ENCODE measurements at regions of chr5 and their contacts with region 1.

Region 1: DNA sequence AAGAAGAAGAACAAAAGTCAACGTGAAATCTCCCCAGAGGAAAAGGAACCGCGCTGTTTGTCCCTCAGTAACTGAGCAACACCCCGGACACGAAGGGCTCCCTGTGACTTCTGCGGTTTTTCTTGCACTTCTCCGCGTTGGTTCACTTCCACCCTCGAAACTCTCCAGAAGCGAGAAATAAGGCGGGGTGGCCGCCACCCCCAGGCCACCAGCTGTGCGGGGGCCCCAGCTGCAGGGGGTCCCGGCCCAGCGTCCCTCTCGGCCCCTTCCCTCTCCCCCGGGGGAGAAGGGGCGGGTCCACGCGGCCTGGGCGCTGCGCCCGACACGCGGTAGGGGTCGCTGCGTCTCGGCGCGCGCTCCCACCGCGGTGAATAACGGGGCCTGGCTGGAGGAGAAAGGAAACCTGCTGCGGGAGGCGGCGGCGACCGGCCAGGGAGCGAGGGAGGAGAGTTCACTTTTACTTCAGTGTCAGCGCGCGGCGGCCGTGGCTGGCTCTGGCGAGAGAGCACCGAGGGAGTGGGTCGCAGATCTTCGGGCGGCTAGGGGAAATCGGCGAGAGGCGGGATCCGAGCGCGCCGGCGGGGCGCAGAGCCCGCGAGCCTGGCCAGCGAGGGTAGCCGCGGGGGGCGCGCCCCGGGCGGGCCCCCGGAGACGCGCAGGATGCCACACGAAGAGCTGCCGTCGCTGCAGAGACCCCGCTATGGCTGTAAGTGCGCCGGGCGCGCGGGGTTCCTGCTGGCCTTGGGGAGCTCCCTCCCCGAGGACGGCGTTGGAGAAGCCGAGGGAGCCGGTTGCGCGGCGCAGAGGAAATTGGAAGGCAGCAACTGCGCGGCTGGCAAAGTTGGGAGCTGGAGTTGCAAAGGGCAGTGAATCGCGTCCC is at the start of gene IQGAP2:
- DNase-seq: peak; percentile 79 to 95 (median 92)
- ATAC-seq: peak; percentile 57 to 65
- H3K4me3 Mint-ChIP-seq: peak within 1 kb of the TSS; percentile 91 to 98 (median 96)
- H3K27ac Mint-ChIP-seq: peak within 1 kb of the TSS; percentile 93 to 98 (median 97)
- H3K4me1 Mint-ChIP-seq: peaks cover 27 to 63% (median 55%) of the 10 kb centered on the region in 4 donors
- H3K27me3 Mint-ChIP-seq: no peaks in the 10 kb centered on the region
- polyA plus RNA-seq, gene IQGAP2: 16.2 to 22.0 (median 19.5) TPM

Region 2: DNA sequence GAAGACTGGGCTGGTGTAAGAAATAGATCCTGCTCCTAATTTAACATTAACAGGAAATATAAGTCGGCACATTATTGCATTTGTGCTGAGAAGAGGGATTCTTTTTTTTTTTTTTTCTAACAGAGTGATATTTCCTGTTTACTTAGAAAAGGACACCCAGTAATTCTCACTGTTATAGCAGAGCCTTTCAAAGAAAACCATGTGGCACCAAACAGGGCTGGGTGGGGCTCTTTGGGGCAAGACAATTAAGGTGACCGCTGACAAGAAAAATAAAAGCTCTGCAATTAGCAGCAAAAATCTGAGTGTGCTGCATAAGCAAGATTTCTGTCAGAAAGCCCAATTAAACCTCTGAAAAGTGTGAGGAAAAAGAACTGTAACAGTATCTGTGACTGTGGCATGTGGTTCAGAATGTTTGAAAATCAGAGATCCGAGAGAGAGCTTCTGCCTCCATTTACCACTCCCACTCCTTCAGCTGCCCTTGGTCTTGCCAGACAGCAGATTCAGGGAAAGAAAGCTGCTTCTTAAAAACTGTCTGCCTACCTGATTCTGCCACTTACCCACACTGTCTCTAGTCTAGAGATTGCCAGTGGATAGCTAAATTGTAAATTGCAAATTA is 77.1 kb before region 1 on chr5:
- POLR2A ChIA-PET with region 1: interaction called, 18 read pairs
- DNase-seq: peak in 4 of 10 donors; percentile 15 to 53 (median 48)
- ATAC-seq: peak; percentile 84 to 89
- H3K4me3 Mint-ChIP-seq: peak overlapping the region; percentile 56 to 83 (median 76)
- H3K27ac Mint-ChIP-seq: peak overlapping the region; percentile 87 to 96 (median 93)
- H3K4me1 Mint-ChIP-seq: peaks cover 28 to 60% (median 47%) of the 10 kb centered on the region in 4 donors
- H3K27me3 Mint-ChIP-seq: no peaks in the 10 kb centered on the region

Region 3: GRCh38 chr5:76384189-76384588 is 18.9 kb before region 1 on chr5:
- POLR2A ChIA-PET with region 1: interaction called, 58 read pairs
- DNase-seq: no peak
- ATAC-seq: peak; percentile 32 to 43
- H3K4me3 Mint-ChIP-seq: peak overlapping the region in 7 of 10 donors; percentile 12 to 63 (median 42)
- H3K27ac Mint-ChIP-seq: peak overlapping the region in 6 of 10 donors; percentile 7 to 85 (median 42)
- H3K4me1 Mint-ChIP-seq: peaks cover 19 to 51% (median 41%) of the 10 kb centered on the region in 4 donors
- H3K27me3 Mint-ChIP-seq: no peaks in the 10 kb centered on the region

Region 4: GRCh38 chr5:76451031-76451701 is 48.0 kb after region 1 on chr5:
- POLR2A ChIA-PET with region 1: no interaction called
- DNase-seq: no peak
- ATAC-seq: no peak
- H3K4me3 Mint-ChIP-seq: peak overlapping the region in 5 of 10 donors; percentile 3 to 46 (median 9)
- H3K27ac Mint-ChIP-seq: peak overlapping the region in 6 of 10 donors; percentile 2 to 65 (median 16)
- H3K4me1 Mint-ChIP-seq: peaks cover 33 to 76% (median 52%) of the 10 kb centered on the region in 4 donors
- H3K27me3 Mint-ChIP-seq: no peaks in the 10 kb centered on the region

Region 5: GRCh38 chr5:76473661-76474060 is 70.5 kb after region 1 on chr5:
- POLR2A ChIA-PET with region 1: interaction called, 22 read pairs
- DNase-seq: peak; percentile 30 to 85 (median 68)
- ATAC-seq: peak; percentile 97 to 99
- H3K4me3 Mint-ChIP-seq: peak overlapping the region; percentile 11 to 85 (median 60)
- H3K27ac Mint-ChIP-seq: peak overlapping the region; percentile 83 to 98 (median 92)
- H3K4me1 Mint-ChIP-seq: peaks cover 35 to 77% (median 72%) of the 10 kb centered on the region in 4 donors
- H3K27me3 Mint-ChIP-seq: no peaks in the 10 kb centered on the region

Region 6: DNA sequence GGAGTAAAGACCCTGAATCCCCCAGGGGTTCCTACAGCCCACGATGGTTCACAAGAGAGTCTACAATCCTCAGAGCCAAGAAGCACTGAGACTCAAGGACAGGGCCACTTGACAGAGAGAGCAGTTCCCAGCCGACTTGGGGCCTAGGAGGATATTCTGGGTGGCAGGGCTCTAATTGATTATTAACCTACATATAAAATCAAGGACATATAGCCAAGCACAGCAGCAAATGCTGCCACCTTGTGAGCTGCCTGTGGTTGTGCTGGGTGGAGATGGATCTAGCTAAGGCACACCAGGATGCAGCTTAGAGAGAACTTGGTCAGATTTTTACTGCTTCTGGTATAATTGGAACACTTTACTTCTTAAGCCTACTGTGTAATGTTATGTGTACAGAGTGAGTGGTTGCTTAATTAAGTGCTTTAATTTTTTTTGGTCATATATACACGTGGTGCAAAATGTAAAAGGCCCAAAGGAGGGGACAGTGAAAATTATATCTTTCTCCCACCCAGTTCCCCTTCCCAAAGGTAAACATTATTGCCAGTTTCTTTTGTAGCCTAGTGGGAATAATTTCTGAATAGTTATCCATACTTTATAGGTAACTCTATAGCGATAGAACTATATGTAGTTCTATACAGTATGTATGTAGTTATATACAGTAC is 141.3 kb after region 1 on chr5:
- POLR2A ChIA-PET with region 1: interaction called, 54 read pairs
- DNase-seq: peak; percentile 16 to 69 (median 44)
- ATAC-seq: peak; percentile 13
- H3K4me3 Mint-ChIP-seq: peak overlapping the region; percentile 63 to 88 (median 78)
- H3K27ac Mint-ChIP-seq: peak overlapping the region; percentile 93 to 99 (median 96)
- H3K4me1 Mint-ChIP-seq: peaks cover 40 to 91% (median 77%) of the 10 kb centered on the region in 4 donors
- H3K27me3 Mint-ChIP-seq: no peaks in the 10 kb centered on the region

Region 7: GRCh38 chr5:76582230-76583162 is 179.4 kb after region 1 on chr5:
- POLR2A ChIA-PET with region 1: interaction called, 10 read pairs
- DNase-seq: no peak
- ATAC-seq: no peak
- H3K4me3 Mint-ChIP-seq: no peak overlapping the region
- H3K27ac Mint-ChIP-seq: peak overlapping the region in 2 of 10 donors; percentile 23 to 66
- H3K4me1 Mint-ChIP-seq: peaks cover 2 to 21% (median 5%) of the 10 kb centered on the region in 4 donors
- H3K27me3 Mint-ChIP-seq: no peaks in the 10 kb centered on the region

Measured in naive thymus-derived CD8-positive, alpha-beta T cell (primary cell).